Transverse colon (tissue), 4 donors: ENCODE measurements at regions of chr9 and their contacts with region 1.

Region 1: DNA sequence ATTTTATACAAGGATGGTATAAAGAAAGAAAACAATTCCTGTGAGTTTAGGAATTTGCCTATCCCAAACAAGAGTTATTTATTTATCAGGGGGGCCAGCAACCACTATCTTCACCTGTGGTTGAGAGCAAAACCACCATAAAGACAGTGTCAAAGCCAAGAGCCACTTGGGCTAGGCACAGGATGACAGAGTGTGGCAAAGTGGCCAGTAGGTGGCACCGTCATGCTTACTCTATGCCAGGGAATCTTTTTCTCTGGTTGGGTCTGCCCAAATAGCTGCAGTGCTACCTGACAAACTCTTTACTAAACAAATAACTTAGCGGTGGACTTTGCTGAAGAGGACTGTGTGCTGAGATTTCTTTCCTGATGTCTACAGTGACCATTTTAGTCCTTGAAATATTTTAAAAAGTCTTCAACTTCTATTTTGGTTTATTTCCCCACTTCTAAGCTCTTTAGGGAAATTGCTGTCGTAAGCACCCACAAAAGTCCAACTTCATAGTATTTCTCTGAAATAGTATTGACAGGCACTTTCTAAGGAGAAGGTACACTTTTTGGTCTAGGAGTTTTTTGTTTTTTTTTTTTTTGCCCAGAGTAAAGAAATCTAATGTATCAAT is 285.0 kb downstream of the RFX3 start:
- DNase-seq: peak; percentile 62
- H3K4me3 ChIP-seq: no peak overlapping the region
- H3K27ac ChIP-seq: no peak overlapping the region
- H3K4me1 ChIP-seq: no peaks in the 10 kb centered on the region
- H3K27me3 ChIP-seq: no peaks in the 10 kb centered on the region
- CTCF ChIP-seq: peak; percentile 44 to 69 (median 59)
- EP300 ChIP-seq: no peak
- POLR2A ChIP-seq: no peak

Region 2: DNA sequence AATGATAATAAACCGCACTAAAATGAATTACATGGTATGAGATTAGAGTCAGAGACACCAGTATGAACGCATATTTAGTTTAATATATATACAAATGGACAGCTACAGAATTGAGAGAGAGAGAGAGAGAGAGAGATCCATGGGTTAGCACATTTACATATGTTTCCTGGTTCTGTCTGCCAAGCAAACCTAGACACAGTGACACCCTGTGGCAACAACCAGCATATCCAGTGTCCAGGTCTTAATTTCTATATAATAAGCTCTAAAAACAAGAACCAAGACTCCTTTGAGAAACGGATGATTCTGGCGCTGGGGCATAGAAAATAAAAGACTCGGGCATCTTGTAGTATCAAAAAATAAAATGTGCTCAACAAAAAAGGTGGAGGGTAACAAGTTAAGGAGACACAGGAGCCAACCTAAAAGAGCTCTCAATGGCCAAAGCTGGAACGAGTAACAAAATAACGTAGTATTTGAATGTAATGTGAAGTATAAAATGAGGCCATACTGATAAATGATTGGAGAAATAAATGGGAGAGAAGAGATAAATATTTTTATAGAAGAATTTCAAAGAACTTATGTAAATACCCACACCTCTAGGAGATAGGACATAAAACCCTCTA is 200.5 kb after region 1 on chr9:
- in situ Hi-C with region 1: loop called in 2 of 4 experiments (anchors 25 kb)
- intact Hi-C with region 1: no loop called
- DNase-seq: peak; percentile 31
- H3K4me3 ChIP-seq: no peak overlapping the region
- H3K27ac ChIP-seq: no peak overlapping the region
- H3K4me1 ChIP-seq: peaks cover 0 to 4% (median 0%) of the 10 kb centered on the region in 4 donors
- H3K27me3 ChIP-seq: no peaks in the 10 kb centered on the region
- CTCF ChIP-seq: peak; percentile 44 to 59 (median 54)
- EP300 ChIP-seq: no peak
- POLR2A ChIP-seq: no peak

Region 3: GRCh38 chr9:4366591-4367330 is 1126.0 kb after region 1 on chr9:
- in situ Hi-C with region 1: loop called in 1 of 4 experiments (anchors 25 kb)
- intact Hi-C with region 1: no loop called
- DNase-seq: peak; percentile 19
- H3K4me3 ChIP-seq: no peak overlapping the region
- H3K27ac ChIP-seq: no peak overlapping the region
- H3K4me1 ChIP-seq: no peaks in the 10 kb centered on the region
- H3K27me3 ChIP-seq: no peaks in the 10 kb centered on the region
- CTCF ChIP-seq: peak; percentile 53 to 69 (median 66)
- EP300 ChIP-seq: no peak
- POLR2A ChIP-seq: no peak